ENCODE measurements at regions of chr12 and their contacts with region 1.

Region 1: GRCh38 chr12:2812290-2813213 is at the start of gene ITFG2:
- DNase-seq: peak; percentile 90 to 99 (median 95)
- ATAC-seq: peak; percentile 92
- H3K4me3 ChIP-seq: peak within 1 kb of the TSS; percentile 66 to 80
- H3K4me3 Mint-ChIP-seq: peak within 1 kb of the TSS; percentile 100
- H3K27ac ChIP-seq: peak within 1 kb of the TSS; percentile 83 to 89
- H3K27ac Mint-ChIP-seq: peak within 1 kb of the TSS; percentile 100
- H3K4me1 ChIP-seq: peaks cover 31% of the 10 kb centered on the region
- H3K4me1 Mint-ChIP-seq: peaks cover 38% of the 10 kb centered on the region
- H3K27me3 ChIP-seq: no peaks in the 10 kb centered on the region
- H3K27me3 Mint-ChIP-seq: no peaks in the 10 kb centered on the region
- CTCF ChIP-seq: no peak
- total RNA-seq, gene ITFG2: 72.8 to 73.5 TPM

Region 2: GRCh38 chr12:1690578-1691122 is 1121.9 kb before region 1 on chr12 and contains the start of gene ADIPOR2:
- CTCF ChIA-PET with region 1: no interaction called
- POLR2A ChIA-PET with region 1: no interaction called
- intact Hi-C with region 1: loop called in 1 of 2 experiments (anchors 2 kb)
- DNase-seq: peak; percentile 88 to 98 (median 94)
- ATAC-seq: peak; percentile 97
- H3K4me3 ChIP-seq: peak within 1 kb of the TSS; percentile 84 to 91
- H3K4me3 Mint-ChIP-seq: peak within 1 kb of the TSS; percentile 92
- H3K27ac ChIP-seq: peak within 1 kb of the TSS; percentile 73 to 94
- H3K27ac Mint-ChIP-seq: peak within 1 kb of the TSS; percentile 99
- H3K4me1 ChIP-seq: peaks cover 20% of the 10 kb centered on the region
- H3K4me1 Mint-ChIP-seq: peaks cover 46% of the 10 kb centered on the region
- H3K27me3 ChIP-seq: no peaks in the 10 kb centered on the region
- H3K27me3 Mint-ChIP-seq: no peaks in the 10 kb centered on the region
- CTCF ChIP-seq: no peak
- total RNA-seq, gene ADIPOR2: 19.4 to 22.5 TPM

Region 3: DNA sequence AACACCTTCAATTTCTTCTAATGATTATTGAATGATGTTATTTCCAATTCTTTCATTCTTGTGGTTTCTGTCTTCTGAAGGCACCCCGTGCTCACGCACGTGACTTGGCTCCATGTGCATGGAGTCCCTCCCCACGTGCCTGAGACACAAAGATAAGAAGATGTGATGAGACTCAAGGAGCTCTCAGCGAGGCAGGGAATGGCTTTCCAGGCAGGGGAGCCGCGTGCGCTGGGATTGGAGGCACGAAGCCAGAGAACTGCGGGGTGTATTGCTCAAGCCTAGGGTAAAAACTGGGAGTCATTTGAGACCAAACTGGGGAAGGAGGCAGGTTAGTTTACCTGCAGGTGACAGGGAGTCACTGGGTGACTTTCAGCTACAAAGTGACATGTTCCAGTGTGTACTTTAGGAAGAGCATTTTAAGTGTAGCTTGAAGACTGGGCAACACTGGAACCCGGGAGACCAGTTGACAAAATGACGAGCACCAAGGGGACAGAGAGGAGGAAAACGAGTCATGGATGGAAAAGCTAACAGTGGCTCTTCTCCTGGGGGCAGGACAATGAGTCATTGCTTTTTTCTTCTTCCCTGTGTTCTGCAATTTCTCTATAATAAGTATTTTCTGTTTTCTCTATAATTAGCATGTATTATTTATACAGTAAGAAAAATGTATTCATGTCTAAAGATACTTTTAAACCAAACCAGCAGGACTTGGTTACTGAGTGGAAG is 329.5 kb before region 1 on chr12:
- CTCF ChIA-PET with region 1: no interaction called
- POLR2A ChIA-PET with region 1: no interaction called
- intact Hi-C with region 1: no loop called
- DNase-seq: no peak
- ATAC-seq: no peak
- H3K4me3 ChIP-seq: no peak overlapping the region
- H3K4me3 Mint-ChIP-seq: no peak overlapping the region
- H3K27ac ChIP-seq: no peak overlapping the region
- H3K27ac Mint-ChIP-seq: no peak overlapping the region
- H3K4me1 ChIP-seq: no peaks in the 10 kb centered on the region
- H3K4me1 Mint-ChIP-seq: no peaks in the 10 kb centered on the region
- H3K27me3 ChIP-seq: no peaks in the 10 kb centered on the region
- H3K27me3 Mint-ChIP-seq: peaks cover 3% of the 10 kb centered on the region
- CTCF ChIP-seq: no peak

Region 4: DNA sequence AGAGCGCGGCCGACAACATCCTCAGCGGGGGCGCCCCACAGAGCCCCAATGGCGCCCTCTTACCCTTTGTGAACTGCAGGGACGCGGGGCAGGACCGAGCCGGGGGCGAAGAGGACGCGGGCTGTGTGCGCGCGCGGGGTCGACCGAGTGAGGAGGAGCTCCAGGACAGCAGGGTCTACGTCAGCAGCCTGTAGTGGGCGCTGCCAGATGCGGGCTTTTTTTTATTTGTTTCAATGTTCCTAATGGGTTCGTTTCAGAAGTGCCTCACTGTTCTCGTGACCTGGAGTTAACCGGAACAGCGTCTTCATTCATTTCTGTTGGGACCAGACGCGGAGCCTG is 121.6 kb before region 1 on chr12:
- CTCF ChIA-PET with region 1: no interaction called
- POLR2A ChIA-PET with region 1: interaction called, 10 read pairs
- intact Hi-C with region 1: loop called (anchors 1 kb)
- DNase-seq: peak in 8 of 9 experiments; percentile 35 to 86 (median 66)
- ATAC-seq: peak; percentile 75
- H3K4me3 ChIP-seq: peak overlapping the region; percentile 50 to 80
- H3K4me3 Mint-ChIP-seq: peak overlapping the region; percentile 92
- H3K27ac ChIP-seq: peak overlapping the region; percentile 75 to 87
- H3K27ac Mint-ChIP-seq: peak overlapping the region; percentile 90
- H3K4me1 ChIP-seq: peaks cover 30% of the 10 kb centered on the region
- H3K4me1 Mint-ChIP-seq: peaks cover 48% of the 10 kb centered on the region
- H3K27me3 ChIP-seq: no peaks in the 10 kb centered on the region
- H3K27me3 Mint-ChIP-seq: no peaks in the 10 kb centered on the region
- CTCF ChIP-seq: no peak

Region 5: GRCh38 chr12:2794736-2795289 is 17.7 kb before region 1 on chr12 and contains the start of gene FKBP4:
- CTCF ChIA-PET with region 1: interaction called, 4 read pairs
- POLR2A ChIA-PET with region 1: interaction called, 31 read pairs
- intact Hi-C with region 1: loop called (anchors 1 kb)
- DNase-seq: peak; percentile 75 to 95 (median 88)
- ATAC-seq: peak; percentile 92
- H3K4me3 ChIP-seq: peak within 1 kb of the TSS; percentile 69 to 71
- H3K4me3 Mint-ChIP-seq: peak within 1 kb of the TSS; percentile 91
- H3K27ac ChIP-seq: peak within 1 kb of the TSS; percentile 50 to 63
- H3K27ac Mint-ChIP-seq: peak within 1 kb of the TSS; percentile 88
- H3K4me1 ChIP-seq: peaks cover 12% of the 10 kb centered on the region
- H3K4me1 Mint-ChIP-seq: peaks cover 24% of the 10 kb centered on the region
- H3K27me3 ChIP-seq: no peaks in the 10 kb centered on the region
- H3K27me3 Mint-ChIP-seq: no peaks in the 10 kb centered on the region
- CTCF ChIP-seq: no peak
- total RNA-seq, gene FKBP4: 31.1 to 34.5 TPM

Region 6: GRCh38 chr12:2890388-2891239 is 78.1 kb after region 1 on chr12 and contains the start of gene TULP3:
- CTCF ChIA-PET with region 1: interaction called, 4 read pairs
- POLR2A ChIA-PET with region 1: interaction called, 5 read pairs
- intact Hi-C with region 1: loop called (anchors 1 to 2 kb)
- DNase-seq: peak; percentile 97 to 99 (median 98)
- ATAC-seq: peak; percentile 94
- H3K4me3 ChIP-seq: peak within 1 kb of the TSS; percentile 98 to 99
- H3K4me3 Mint-ChIP-seq: peak within 1 kb of the TSS; percentile 98
- H3K27ac ChIP-seq: peak within 1 kb of the TSS; percentile 71 to 85
- H3K27ac Mint-ChIP-seq: peak within 1 kb of the TSS; percentile 95
- H3K4me1 ChIP-seq: peaks cover 16% of the 10 kb centered on the region
- H3K4me1 Mint-ChIP-seq: peaks cover 30% of the 10 kb centered on the region
- H3K27me3 ChIP-seq: no peaks in the 10 kb centered on the region
- H3K27me3 Mint-ChIP-seq: no peaks in the 10 kb centered on the region
- CTCF ChIP-seq: no peak
- total RNA-seq, gene TULP3: 2.7 to 3.0 TPM

Measured in CD8-positive, alpha-beta T cell (primary cell).